ENCODE measurements at regions of chr9 and their contacts with region 1.

Region 1: DNA sequence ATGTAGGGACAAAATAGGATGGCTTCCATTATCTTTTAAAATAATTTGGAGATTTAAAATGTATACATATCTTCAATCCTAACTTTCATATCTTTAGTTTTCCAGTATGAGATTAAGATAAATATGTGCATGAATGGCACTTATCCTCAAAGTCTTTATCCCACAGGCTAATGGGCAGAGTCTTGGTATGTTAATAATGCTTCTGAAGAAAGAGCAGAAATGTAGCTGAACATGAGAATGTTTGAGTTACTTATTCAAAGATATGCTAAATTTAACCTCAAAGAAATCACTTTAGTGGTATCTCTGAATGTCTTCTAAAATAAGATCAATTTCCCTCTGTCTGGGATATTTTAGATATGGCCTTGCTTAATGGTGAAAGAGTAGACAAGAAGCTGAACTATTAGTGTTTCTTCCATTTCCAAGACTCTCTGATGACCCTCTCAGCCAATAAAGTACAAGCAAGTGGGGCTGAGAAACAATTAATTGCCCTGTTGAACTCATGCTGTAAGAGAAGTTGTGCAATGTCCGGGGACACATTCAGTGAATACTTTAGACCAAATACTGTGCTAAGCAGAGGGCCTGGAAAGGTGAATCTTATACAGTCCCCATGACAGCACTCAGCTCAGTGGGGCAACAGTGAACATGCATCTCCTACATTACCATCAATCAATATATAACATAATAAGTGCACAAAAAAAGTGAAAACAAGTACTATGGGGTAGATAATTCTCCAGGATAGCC is 50.0 kb upstream of the ADAMTSL1 start:
- DNase-seq: no peak
- ATAC-seq: no peak
- H3K4me3 ChIP-seq: no peak overlapping the region
- H3K27ac ChIP-seq: no peak overlapping the region
- H3K4me1 ChIP-seq: no peaks in the 10 kb centered on the region
- H3K27me3 ChIP-seq: no peaks in the 10 kb centered on the region
- CTCF ChIP-seq: no peak
- EP300 ChIP-seq: no peak
- POLR2A ChIP-seq: no peak
- RAD21 ChIP-seq: no peak

Region 2: GRCh38 chr9:18189871-18190670 is 233.9 kb before region 1 on chr9:
- CTCF ChIA-PET with region 1: no interaction called
- POLR2A ChIA-PET with region 1: no interaction called
- RAD21 ChIA-PET with region 1: no interaction called
- SMC1A ChIA-PET with region 1: no interaction called
- in situ Hi-C with region 1: no loop called
- intact Hi-C with region 1: no loop called
- DNase-seq: no peak
- ATAC-seq: no peak
- H3K4me3 ChIP-seq: no peak overlapping the region
- H3K27ac ChIP-seq: no peak overlapping the region
- H3K4me1 ChIP-seq: no peaks in the 10 kb centered on the region
- H3K27me3 ChIP-seq: no peaks in the 10 kb centered on the region
- CTCF ChIP-seq: no peak
- EP300 ChIP-seq: no peak
- POLR2A ChIP-seq: no peak
- RAD21 ChIP-seq: no peak

Region 3: DNA sequence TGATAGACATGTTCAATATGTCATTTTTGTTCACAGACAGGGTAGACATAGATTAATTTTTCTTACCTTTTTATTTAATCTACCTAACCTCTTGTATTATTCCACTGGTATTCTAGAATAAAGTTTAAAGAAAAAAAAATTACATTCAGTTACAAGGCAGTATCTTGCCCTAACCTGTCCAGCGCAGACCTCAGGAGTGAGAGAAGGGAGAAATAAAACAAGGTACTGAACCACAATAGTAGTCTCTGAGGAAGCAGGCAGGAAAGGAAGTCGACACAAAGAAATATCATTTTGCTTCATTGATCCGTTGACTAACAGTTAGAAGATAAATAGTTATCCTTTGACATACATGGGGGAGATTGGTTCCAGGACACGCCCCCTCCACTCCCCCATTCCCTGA is 37.5 kb after region 1 on chr9:
- CTCF ChIA-PET with region 1: no interaction called
- POLR2A ChIA-PET with region 1: no interaction called
- RAD21 ChIA-PET with region 1: no interaction called
- SMC1A ChIA-PET with region 1: no interaction called
- in situ Hi-C with region 1: no loop called
- intact Hi-C with region 1: loop called (anchors 1 kb)
- DNase-seq: no peak
- ATAC-seq: no peak
- H3K4me3 ChIP-seq: no peak overlapping the region
- H3K27ac ChIP-seq: no peak overlapping the region
- H3K4me1 ChIP-seq: no peaks in the 10 kb centered on the region
- H3K27me3 ChIP-seq: no peaks in the 10 kb centered on the region
- CTCF ChIP-seq: no peak
- EP300 ChIP-seq: no peak
- POLR2A ChIP-seq: no peak
- RAD21 ChIP-seq: no peak

Measured in GM12878 (cell line).